ENCODE measurements at regions of chr7 and their contacts with region 1.

Region 1: GRCh38 chr7:36670585-36671431 is 53.5 kb downstream of the AOAH start:
- DNase-seq: peak; percentile 76
- H3K4me3 ChIP-seq: no peak overlapping the region
- H3K27ac ChIP-seq: no peak overlapping the region
- H3K4me1 ChIP-seq: peaks cover 29% of the 10 kb centered on the region
- H3K27me3 ChIP-seq: no peaks in the 10 kb centered on the region
- CTCF ChIP-seq: peak; percentile 94 to 96

Region 2: GRCh38 chr7:36473454-36474282 is 197.1 kb before region 1 on chr7:
- CTCF ChIA-PET with region 1: no interaction called
- dilution Hi-C with region 1: no loop called
- in situ Hi-C with region 1: no loop called
- intact Hi-C with region 1: loop called (anchors 5 kb)
- DNase-seq: peak; percentile 93
- H3K4me3 ChIP-seq: no peak overlapping the region
- H3K27ac ChIP-seq: peak overlapping the region; percentile 68
- H3K4me1 ChIP-seq: peaks cover 31% of the 10 kb centered on the region
- H3K27me3 ChIP-seq: no peaks in the 10 kb centered on the region
- CTCF ChIP-seq: peak; percentile 38 to 52

Region 3: GRCh38 chr7:36583318-36583717 is 87.5 kb before region 1 on chr7:
- CTCF ChIA-PET with region 1: no interaction called
- dilution Hi-C with region 1: no loop called
- in situ Hi-C with region 1: no loop called
- intact Hi-C with region 1: loop called (anchors 5 kb)
- DNase-seq: peak; percentile 62
- H3K4me3 ChIP-seq: no peak overlapping the region
- H3K27ac ChIP-seq: no peak overlapping the region
- H3K4me1 ChIP-seq: peaks cover 10% of the 10 kb centered on the region
- H3K27me3 ChIP-seq: no peaks in the 10 kb centered on the region
- CTCF ChIP-seq: no peak

Region 4: GRCh38 chr7:36659172-36659516 is 11.7 kb before region 1 on chr7:
- CTCF ChIA-PET with region 1: no interaction called
- dilution Hi-C with region 1: no loop called
- in situ Hi-C with region 1: no loop called
- intact Hi-C with region 1: loop called (anchors 1 kb)
- DNase-seq: peak; percentile 97
- H3K4me3 ChIP-seq: no peak overlapping the region
- H3K27ac ChIP-seq: peak overlapping the region; percentile 93
- H3K4me1 ChIP-seq: peaks cover 34% of the 10 kb centered on the region
- H3K27me3 ChIP-seq: no peaks in the 10 kb centered on the region
- CTCF ChIP-seq: no peak

Region 5: GRCh38 chr7:37031571-37032257 is 360.9 kb after region 1 on chr7:
- CTCF ChIA-PET with region 1: no interaction called
- dilution Hi-C with region 1: no loop called
- in situ Hi-C with region 1: no loop called
- intact Hi-C with region 1: loop called (anchors 5 kb)
- DNase-seq: peak; percentile 97
- H3K4me3 ChIP-seq: no peak overlapping the region
- H3K27ac ChIP-seq: peak overlapping the region; percentile 66
- H3K4me1 ChIP-seq: peaks cover 23% of the 10 kb centered on the region
- H3K27me3 ChIP-seq: no peaks in the 10 kb centered on the region
- CTCF ChIP-seq: no peak

Measured in mammary epithelial cell (primary cell).